HEK293T (cell line): ENCODE measurements at regions of chr6 and their contacts with region 1.

Region 1: DNA sequence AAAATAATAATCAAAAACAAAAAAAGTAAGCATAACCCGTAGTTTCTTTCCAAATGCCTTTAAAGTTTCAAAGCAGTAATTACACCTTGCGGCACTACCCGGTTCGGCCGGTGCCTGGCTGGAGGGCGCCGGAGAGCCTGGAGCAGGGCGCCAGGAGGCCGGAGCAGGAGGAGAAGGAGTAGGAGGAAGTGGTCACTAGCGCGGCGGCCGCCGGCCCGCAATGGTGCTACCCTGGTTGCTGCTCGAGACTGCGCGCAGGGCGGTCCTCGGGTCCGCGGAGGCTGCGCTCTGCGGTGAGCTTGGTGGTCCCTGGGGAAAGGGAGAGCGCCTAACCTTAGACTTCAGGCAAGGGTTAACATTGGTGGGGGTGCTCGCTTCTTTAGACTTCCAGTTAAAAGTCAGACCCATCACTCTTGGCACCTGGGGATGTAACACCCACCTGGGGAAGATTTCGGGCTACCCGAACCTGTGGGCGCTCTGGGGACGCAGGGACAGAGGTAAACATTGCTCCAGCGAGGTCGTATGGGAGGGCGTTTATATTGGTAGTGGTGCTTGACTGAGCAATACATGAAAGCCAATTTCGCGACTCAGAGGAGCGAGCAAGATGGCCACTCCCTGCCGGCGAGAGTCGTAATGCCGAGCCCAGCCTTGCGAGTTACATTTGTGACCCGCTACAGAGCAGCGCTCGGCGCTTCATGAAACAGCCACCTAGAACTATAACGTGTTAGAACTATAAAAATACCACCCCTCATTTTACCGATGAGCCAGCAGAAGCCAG is 5.8 kb upstream of the USP45 start:
- DNase-seq: peak; percentile 82

Region 2: GRCh38 chr6:99568103-99568933 is 47.3 kb after region 1 on chr6 and contains the start of gene CCNC:
- CTCF ChIA-PET with region 1: interaction called, 4 read pairs
- POLR2A ChIA-PET with region 1: interaction called, 22 read pairs
- DNase-seq: peak; percentile 91

Region 3: DNA sequence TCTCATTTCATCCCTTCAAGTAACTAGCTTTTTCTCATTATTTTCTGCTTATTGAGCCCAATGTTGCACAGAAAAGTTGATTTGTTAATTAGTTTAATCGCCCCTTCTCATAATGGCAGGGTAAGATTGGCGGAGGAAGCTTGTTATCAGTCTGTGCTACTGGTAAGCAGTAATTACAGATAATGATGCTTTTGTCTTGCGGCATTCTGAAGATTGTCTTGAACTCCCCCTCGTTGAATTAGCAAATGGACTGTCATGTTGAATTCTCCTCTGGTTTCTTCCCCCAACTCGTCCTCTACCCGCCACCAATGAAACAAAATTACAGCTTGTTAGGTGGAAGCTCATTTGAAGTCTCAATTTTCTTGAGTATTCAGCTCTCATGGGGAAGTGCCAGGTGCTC is 124.9 kb after region 1 on chr6:
- CTCF ChIA-PET with region 1: no interaction called
- POLR2A ChIA-PET with region 1: no interaction called
- DNase-seq: no peak